MCF 10A (cell line): ENCODE measurements at regions of chr5 and their contacts with region 1.

Region 1: GRCh38 chr5:146965761-146966659 is 87.5 kb upstream of the PPP2R2B start:
- DNase-seq: peak; percentile 89
- H3K4me3 Mint-ChIP-seq: no peak overlapping the region
- H3K27ac Mint-ChIP-seq: no peak overlapping the region
- H3K4me1 Mint-ChIP-seq: peaks cover 11% of the 10 kb centered on the region
- H3K27me3 Mint-ChIP-seq: peaks cover 24% of the 10 kb centered on the region
- CTCF ChIP-seq: peak; percentile 89

Region 2: GRCh38 chr5:146528236-146528635 is 437.8 kb before region 1 on chr5:
- CTCF ChIA-PET with region 1: interaction called, 242 read pairs
- POLR2A ChIA-PET with region 1: no interaction called
- intact Hi-C with region 1: loop called (anchors 1 kb)
- DNase-seq: peak; percentile 36
- H3K4me3 Mint-ChIP-seq: no peak overlapping the region
- H3K27ac Mint-ChIP-seq: no peak overlapping the region
- H3K4me1 Mint-ChIP-seq: peaks cover 16% of the 10 kb centered on the region
- H3K27me3 Mint-ChIP-seq: no peaks in the 10 kb centered on the region
- CTCF ChIP-seq: peak; percentile 9

Region 3: DNA sequence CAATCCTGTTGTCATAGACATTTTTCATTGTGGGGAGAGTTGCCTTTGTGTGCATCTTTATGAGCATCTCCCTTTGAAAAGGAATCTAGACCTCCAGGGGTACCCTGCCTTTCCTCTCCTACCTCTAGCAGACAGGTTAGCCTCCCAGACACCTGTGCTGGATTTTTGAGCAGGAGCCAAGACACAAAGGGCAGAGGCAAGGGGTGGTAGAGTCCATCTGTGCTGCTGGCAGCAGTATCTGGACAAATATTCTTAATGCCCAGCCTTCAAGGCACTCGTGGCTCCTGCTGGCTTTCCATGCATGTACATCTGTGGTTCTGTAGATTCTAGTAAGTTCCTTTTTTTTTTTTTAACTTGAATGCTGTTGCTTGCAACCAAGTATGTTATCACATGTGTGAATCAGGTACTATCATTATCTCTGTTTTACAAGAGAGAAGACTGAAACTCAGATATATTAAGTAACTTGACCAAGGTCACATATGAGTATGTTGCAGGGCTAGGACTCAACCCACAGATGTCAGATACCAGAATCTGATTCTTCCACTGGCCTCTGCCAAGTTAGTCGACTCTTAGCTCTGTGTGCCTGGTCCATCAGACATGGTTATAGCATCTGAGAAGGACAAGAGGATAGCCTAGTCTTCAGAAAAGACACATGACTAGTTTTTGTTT is 417.1 kb before region 1 on chr5:
- CTCF ChIA-PET with region 1: interaction called, 485 read pairs
- POLR2A ChIA-PET with region 1: interaction called, 4 read pairs
- intact Hi-C with region 1: no loop called
- DNase-seq: no peak
- H3K4me3 Mint-ChIP-seq: no peak overlapping the region
- H3K27ac Mint-ChIP-seq: no peak overlapping the region
- H3K4me1 Mint-ChIP-seq: no peaks in the 10 kb centered on the region
- H3K27me3 Mint-ChIP-seq: peaks cover 69% of the 10 kb centered on the region
- CTCF ChIP-seq: no peak

Region 4: DNA sequence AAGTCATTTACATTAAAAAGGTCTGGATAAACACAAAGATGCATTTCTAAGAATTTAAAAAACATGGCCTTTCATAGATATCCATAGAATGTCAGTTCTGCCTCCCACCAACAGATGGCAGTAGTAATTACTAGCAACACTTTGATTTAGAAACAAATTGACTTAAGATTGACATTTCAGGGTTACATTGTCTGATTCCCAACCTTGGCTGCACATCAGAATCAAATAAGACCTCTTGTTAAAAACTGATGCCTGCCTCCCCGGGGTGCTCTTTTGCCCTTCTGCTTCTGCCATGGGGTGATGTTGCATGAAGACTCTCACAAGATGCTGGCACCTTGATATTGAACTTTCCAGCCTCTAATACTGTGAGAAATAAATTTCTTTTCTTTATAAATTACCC is 303.8 kb before region 1 on chr5:
- CTCF ChIA-PET with region 1: interaction called, 14 read pairs
- POLR2A ChIA-PET with region 1: no interaction called
- intact Hi-C with region 1: loop called (anchors 5 kb)
- DNase-seq: peak; percentile 39
- H3K4me3 Mint-ChIP-seq: no peak overlapping the region
- H3K27ac Mint-ChIP-seq: no peak overlapping the region
- H3K4me1 Mint-ChIP-seq: no peaks in the 10 kb centered on the region
- H3K27me3 Mint-ChIP-seq: no peaks in the 10 kb centered on the region
- CTCF ChIP-seq: peak; percentile 32

Region 5: GRCh38 chr5:146785065-146785464 is 180.9 kb before region 1 on chr5:
- CTCF ChIA-PET with region 1: no interaction called
- POLR2A ChIA-PET with region 1: no interaction called
- intact Hi-C with region 1: no loop called
- DNase-seq: no peak
- H3K4me3 Mint-ChIP-seq: no peak overlapping the region
- H3K27ac Mint-ChIP-seq: no peak overlapping the region
- H3K4me1 Mint-ChIP-seq: no peaks in the 10 kb centered on the region
- H3K27me3 Mint-ChIP-seq: peaks cover 19% of the 10 kb centered on the region
- CTCF ChIP-seq: no peak

Region 6: GRCh38 chr5:147162740-147163139 is 196.7 kb after region 1 on chr5:
- CTCF ChIA-PET with region 1: interaction called, 10 read pairs
- POLR2A ChIA-PET with region 1: no interaction called
- intact Hi-C with region 1: no loop called
- DNase-seq: no peak
- H3K4me3 Mint-ChIP-seq: no peak overlapping the region
- H3K27ac Mint-ChIP-seq: no peak overlapping the region
- H3K4me1 Mint-ChIP-seq: no peaks in the 10 kb centered on the region
- H3K27me3 Mint-ChIP-seq: peaks cover 15% of the 10 kb centered on the region
- CTCF ChIP-seq: no peak

Region 7: DNA sequence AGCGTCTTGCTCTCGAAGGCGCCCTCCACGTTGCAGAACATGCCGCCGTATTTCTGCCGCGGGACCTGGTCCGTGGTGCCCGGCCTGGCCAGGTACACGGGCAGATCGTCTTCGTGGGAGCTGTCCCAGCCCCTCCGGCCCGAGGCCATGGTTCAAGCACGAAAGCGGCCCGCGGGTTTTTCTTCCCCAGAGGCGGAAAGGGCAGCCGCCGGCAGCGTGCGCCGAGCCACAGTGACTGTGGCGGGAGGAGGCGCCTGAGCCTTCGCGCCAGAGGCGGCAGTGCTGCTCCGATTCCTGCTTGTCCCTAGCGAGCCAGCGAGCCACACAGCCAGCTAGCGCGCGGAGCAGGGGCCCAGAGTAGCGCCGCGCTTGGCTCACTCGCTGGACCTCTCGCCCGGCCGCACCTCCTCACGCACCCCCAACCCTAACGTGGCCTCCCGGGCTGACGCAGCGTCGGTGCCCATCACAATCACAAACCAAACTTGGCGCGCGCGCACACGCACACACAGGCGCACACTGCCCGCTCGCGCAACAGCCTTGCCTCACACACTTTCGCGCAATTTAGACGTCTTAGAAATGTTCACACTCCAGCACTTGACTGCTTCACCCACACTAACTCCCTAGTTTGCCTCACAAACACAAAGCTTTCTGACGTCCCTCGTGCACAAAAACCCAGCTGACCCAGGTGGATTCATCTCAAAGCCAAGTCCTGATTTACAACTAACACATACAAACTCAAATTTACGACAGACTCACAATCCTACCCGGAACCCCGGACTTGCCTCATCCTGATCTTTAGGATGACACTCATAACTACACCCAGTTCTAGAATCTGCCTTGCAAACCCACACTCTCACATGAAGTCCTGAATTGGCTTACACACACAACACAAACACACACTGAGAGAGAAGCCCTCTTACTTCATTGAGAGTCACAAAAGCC is 544.0 kb after region 1 on chr5 and contains the start of gene DPYSL3:
- CTCF ChIA-PET with region 1: no interaction called
- POLR2A ChIA-PET with region 1: no interaction called
- intact Hi-C with region 1: no loop called
- DNase-seq: peak; percentile 69
- H3K4me3 Mint-ChIP-seq: peak within 1 kb of the TSS; percentile 73
- H3K27ac Mint-ChIP-seq: peak within 1 kb of the TSS; percentile 21
- H3K4me1 Mint-ChIP-seq: peaks cover 14% of the 10 kb centered on the region
- H3K27me3 Mint-ChIP-seq: peaks cover 32% of the 10 kb centered on the region
- CTCF ChIP-seq: peak; percentile 25
- total RNA-seq, gene DPYSL3: 8.2 and 8.9 TPM in 2 replicates